GM12878 (cell line): ENCODE measurements at regions of chr6 and their contacts with region 1.

Region 1: DNA sequence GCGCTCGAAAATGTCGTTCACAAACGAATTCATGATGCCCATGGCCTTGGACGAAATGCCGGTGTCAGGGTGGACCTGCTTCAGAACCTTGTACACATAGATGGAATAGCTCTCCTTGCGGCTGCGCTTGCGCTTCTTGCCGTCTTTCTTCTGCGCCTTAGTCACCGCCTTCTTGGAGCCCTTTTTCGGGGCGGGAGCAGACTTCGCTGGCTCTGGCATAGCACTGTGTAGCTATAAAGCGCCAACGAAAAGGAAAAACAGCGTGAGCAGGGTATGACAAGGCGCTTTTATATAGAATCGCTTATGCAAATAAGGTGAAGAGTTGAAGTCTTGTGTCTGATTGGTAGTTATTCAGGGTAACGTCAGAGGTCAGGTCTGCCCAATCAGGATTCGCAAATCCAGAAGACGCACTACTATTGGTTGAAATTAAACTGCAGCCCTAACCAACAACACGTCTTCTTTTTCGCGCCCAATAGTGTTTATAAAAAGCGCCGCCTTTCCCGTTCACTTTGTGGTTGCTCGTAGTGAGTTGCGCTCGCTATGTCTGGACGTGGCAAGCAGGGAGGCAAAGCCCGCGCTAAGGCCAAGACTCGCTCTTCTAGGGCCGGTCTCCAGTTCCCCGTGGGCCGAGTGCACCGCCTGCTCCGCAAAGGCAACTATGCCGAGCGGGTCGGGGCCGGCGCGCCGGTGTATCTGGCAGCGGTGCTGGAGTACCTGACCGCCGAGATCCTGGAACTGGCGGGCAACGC is 114.8 kb upstream of the PRSS16 start:
- DNase-seq: peak; percentile 100
- ATAC-seq: peak; percentile 72
- H3K4me3 ChIP-seq: peak overlapping the region; percentile 65
- H3K27ac ChIP-seq: peak overlapping the region; percentile 94
- H3K4me1 ChIP-seq: peaks cover 22% of the 10 kb centered on the region
- H3K27me3 ChIP-seq: no peaks in the 10 kb centered on the region
- CTCF ChIP-seq: no peak
- EP300 ChIP-seq: peak in 1 of 2 experiments; percentile 20; a peak in 1 of 4 replicates
- POLR2A ChIP-seq: peak; percentile 93
- RAD21 ChIP-seq: no peak

Region 2: GRCh38 chr6:26045065-26045927 is 1087.4 kb before region 1 on chr6:
- CTCF ChIA-PET with region 1: no interaction called
- POLR2A ChIA-PET with region 1: no interaction called
- RAD21 ChIA-PET with region 1: interaction called, 3 read pairs
- SMC1A ChIA-PET with region 1: no interaction called
- in situ Hi-C with region 1: no loop called
- intact Hi-C with region 1: loop called (anchors 2 kb)
- DNase-seq: peak; percentile 99
- ATAC-seq: peak; percentile 79
- H3K4me3 ChIP-seq: peak overlapping the region; percentile 64
- H3K27ac ChIP-seq: peak overlapping the region; percentile 97
- H3K4me1 ChIP-seq: peaks cover 21% of the 10 kb centered on the region
- H3K27me3 ChIP-seq: no peaks in the 10 kb centered on the region
- CTCF ChIP-seq: 0 out of 6 replicates have a peak, but pooled peaks of 2 of the 3 experiments have one; percentile 13 to 19
- EP300 ChIP-seq: no peak
- POLR2A ChIP-seq: peak; percentile 98
- RAD21 ChIP-seq: no peak

Region 3: GRCh38 chr6:27146706-27147505 is 14.2 kb after region 1 on chr6:
- CTCF ChIA-PET with region 1: interaction called, 46 read pairs
- POLR2A ChIA-PET with region 1: interaction called, 62 read pairs
- RAD21 ChIA-PET with region 1: interaction called, 40 read pairs
- SMC1A ChIA-PET with region 1: interaction called, 96 read pairs
- in situ Hi-C with region 1: no loop called
- intact Hi-C with region 1: loop called (anchors 1 kb)
- DNase-seq: peak; percentile 100
- ATAC-seq: peak; percentile 73
- H3K4me3 ChIP-seq: peak overlapping the region; percentile 92
- H3K27ac ChIP-seq: peak overlapping the region; percentile 98
- H3K4me1 ChIP-seq: peaks cover 10% of the 10 kb centered on the region; the same call in 1 of the 2 replicates
- H3K27me3 ChIP-seq: no peaks in the 10 kb centered on the region
- CTCF ChIP-seq: no peak
- EP300 ChIP-seq: no peak; a peak in 1 of 4 replicates
- POLR2A ChIP-seq: peak; percentile 88
- RAD21 ChIP-seq: no peak

Region 4: GRCh38 chr6:27809939-27810767 is 677.4 kb after region 1 on chr6:
- CTCF ChIA-PET with region 1: no interaction called
- POLR2A ChIA-PET with region 1: interaction called, 11 read pairs
- RAD21 ChIA-PET with region 1: interaction called, 5 read pairs
- SMC1A ChIA-PET with region 1: interaction called, 4 read pairs
- in situ Hi-C with region 1: no loop called
- intact Hi-C with region 1: loop called (anchors 2 kb)
- DNase-seq: peak; percentile 98
- ATAC-seq: peak; percentile 43
- H3K4me3 ChIP-seq: peak overlapping the region; percentile 74
- H3K27ac ChIP-seq: peak overlapping the region; percentile 82
- H3K4me1 ChIP-seq: peaks cover 25% of the 10 kb centered on the region
- H3K27me3 ChIP-seq: no peaks in the 10 kb centered on the region
- CTCF ChIP-seq: peak in 1 of 3 experiments; percentile 19; a peak in 2 of 6 replicates
- EP300 ChIP-seq: no peak
- POLR2A ChIP-seq: peak; percentile 95
- RAD21 ChIP-seq: no peak